ENCODE measurements at regions of chr2 and their contacts with region 1.

Region 1: DNA sequence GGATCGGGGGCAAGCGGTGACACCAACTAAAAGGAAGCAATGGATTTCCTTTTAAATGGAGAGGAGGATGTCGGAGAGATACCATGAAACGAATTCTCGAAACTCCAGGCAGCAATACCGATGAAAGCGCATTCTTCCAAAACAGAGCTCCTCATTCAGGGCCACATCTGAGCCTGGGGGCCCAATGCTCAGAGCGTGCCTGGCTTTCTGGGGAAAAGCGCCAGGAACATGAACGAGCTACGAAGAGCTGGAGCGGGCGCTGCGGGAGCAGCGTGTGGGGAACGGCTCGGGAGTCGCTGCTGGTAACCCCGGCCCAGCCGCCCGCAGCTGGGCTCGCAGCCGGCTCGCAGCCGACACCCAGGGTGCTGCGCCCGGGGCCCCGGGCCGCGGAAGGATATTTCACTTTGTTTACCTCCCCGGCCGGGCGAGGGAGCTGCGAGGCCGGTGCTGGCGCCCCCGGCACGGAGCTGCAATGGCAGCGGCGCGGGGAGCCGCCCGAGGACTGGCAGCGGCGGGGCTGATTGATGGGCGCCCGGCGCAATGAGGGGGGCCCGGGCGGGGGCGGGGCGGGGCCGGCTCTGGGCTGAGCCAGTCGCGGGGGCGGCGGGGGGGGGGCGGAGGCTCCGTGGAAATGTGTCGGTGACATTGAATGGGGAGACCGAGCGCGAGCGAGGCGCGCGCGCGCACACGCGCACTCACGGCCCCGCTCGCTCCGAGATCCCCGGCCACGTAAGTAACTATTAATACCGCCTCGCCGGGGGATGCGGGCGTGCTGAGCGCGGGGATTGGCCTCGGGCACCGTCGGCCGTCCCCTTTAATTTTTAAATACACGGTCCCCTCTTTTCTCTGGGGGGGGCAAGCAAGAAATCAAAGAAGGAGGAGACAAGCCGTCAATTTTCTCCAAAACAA is at the start of gene TRIB2:
- DNase-seq: peak; percentile 93
- ATAC-seq: peak; percentile 86
- total RNA-seq, gene TRIB2: 33.4 TPM

Region 2: GRCh38 chr2:11955314-11955713 is 761.2 kb before region 1 on chr2:
- intact Hi-C with region 1: loop called (anchors 10 kb)
- DNase-seq: no peak
- ATAC-seq: peak; percentile 67

Region 3: GRCh38 chr2:12416600-12416999 is 299.9 kb before region 1 on chr2:
- intact Hi-C with region 1: loop called (anchors 1 kb)
- DNase-seq: peak; percentile 72
- ATAC-seq: peak; percentile 45

Region 4: GRCh38 chr2:12567411-12567810 is 149.1 kb before region 1 on chr2:
- intact Hi-C with region 1: no loop called
- DNase-seq: no peak
- ATAC-seq: no peak

Region 5: DNA sequence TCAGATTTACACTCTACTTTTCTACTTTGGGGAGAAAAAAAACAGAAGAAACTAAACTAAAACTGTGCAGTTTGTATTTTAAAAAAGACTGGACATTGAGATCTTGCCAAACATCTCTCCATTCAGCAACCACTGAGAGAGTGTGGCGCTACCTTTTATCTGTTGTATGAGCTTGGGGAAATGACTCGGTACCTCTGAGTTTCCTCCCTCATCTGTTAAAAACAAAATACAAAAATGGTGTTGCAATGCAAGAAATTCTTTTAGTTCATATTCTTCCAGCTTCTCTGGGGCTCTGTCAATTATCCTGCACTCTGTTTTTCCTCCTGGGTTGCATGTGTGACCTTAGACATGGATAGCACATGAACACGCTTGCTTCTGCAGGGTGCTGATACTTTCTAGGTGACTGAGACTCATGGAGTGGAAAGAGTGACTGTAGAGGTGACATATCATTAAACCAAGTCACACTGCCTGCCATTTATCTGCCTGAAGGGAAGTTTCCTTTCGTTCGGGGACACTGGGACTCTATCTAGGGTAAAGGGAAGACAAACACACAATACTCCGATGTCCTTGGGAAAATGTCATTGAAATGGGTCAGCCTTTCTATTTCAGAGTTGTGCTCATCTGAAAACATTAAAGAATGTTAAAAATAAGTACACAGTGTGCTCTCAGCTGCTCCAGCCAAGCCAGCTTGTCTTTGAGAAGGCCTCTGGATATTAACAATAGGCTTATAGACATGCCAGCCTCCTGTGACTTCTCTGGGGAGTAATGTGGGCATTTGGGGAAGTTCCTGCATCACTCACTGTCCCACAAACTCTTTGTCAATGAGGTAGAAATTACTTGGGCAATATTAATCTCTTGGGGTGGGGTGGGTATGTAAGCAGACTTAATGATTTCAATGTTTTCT is 91.6 kb after region 1 on chr2:
- intact Hi-C with region 1: loop called (anchors 2 kb)
- DNase-seq: no peak
- ATAC-seq: peak; percentile 84

Region 6: GRCh38 chr2:12931186-12931844 is 214.8 kb after region 1 on chr2:
- intact Hi-C with region 1: loop called (anchors 1 kb)
- DNase-seq: no peak
- ATAC-seq: peak; percentile 86